HepG2 (cell line): ENCODE measurements at regions of chr12 and their contacts with region 1.

Region 1: DNA sequence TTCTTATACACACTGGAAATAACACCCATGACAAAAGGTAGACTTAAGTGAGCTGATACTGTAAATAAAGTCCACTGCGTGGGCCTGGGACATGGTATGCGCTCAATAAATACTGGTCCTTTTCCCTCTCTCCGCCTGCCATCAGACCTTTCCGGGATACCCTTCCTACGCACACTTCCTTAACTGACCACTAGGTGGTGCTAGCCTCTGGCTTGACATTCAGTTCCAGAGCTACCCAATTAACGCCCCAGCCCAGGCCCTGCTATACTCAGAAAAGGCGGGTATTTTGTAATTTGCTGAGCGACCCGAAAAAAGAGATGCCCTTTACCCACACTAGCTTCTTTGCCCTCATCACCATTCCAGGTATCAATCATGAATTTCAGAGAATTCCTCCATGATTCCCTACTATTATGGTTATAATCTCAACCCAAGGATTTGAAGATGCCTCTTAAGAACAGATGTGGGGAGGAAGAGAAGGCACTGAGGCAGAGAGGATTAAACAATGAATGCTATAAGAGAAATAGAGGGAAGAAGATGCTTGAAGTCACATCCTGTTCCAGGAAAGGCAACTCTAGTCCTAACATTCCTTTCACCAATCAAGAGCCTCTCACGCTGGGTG is 3.9 kb upstream of the LRP1 start:
- DNase-seq: peak; percentile 73
- ATAC-seq: peak; percentile 49
- H3K4me3 ChIP-seq: no peak overlapping the region
- H3K27ac ChIP-seq: no peak overlapping the region
- H3K4me1 ChIP-seq: peaks cover 10% of the 10 kb centered on the region
- H3K27me3 ChIP-seq: no peaks in the 10 kb centered on the region; a peak in 1 of 5 replicates
- CTCF ChIP-seq: peak; percentile 91
- EP300 ChIP-seq: no peak
- POLR2A ChIP-seq: no peak
- RAD21 ChIP-seq: peak; percentile 90

Region 2: DNA sequence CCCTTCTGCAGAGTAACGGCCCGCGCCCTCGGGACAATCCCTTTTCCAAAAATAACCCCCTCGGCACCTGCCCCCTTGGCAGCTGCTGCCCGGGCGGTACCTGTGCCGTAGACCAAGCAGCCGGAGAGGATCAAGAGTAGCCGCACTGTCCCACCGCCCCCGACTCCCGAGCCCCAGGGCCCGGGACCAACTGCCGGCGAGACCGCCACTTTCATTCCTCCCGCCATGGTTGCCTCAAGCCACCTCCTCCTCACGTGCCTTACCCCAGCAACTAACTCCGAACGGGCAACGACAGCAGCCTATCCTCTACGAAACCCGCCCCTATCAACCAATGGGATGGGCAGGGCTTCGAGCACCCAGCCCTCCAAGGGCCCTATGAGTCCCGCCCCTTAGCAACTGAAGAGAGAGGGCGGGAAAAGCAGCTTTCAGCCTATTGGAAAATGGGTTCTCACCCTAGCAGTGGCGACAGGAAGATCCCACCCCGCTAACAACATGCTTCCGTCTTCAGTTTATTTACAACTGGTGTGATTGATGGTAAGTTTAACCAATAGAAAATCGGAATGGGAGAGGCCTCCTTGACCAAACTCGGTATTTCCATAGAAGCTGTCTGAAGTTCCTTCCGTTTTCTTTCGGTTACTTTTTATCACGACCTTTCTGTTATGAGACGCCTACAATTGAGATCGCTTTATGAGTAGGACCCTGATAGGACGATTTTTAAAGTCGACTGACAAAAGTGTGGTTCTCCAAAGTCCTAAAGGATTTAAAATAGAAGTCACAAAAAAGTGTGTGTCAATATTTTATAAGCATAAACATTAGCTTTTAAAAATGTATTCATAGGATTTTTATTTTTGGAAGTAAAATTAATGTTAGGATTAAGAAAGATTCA is 45.6 kb before region 1 on chr12 and contains the start of gene NEMP1:
- CTCF ChIA-PET with region 1: no interaction called
- POLR2A ChIA-PET with region 1: interaction called, 30 read pairs
- in situ Hi-C with region 1: no loop called
- intact Hi-C with region 1: no loop called
- DNase-seq: peak; percentile 100
- ATAC-seq: peak; percentile 99
- H3K4me3 ChIP-seq: peak within 1 kb of the TSS; percentile 86 to 91 (median 87)
- H3K27ac ChIP-seq: peak within 1 kb of the TSS; percentile 69
- H3K4me1 ChIP-seq: peaks cover 8% of the 10 kb centered on the region
- H3K27me3 ChIP-seq: no peaks in the 10 kb centered on the region
- CTCF ChIP-seq: no peak
- EP300 ChIP-seq: peak in 1 of 2 experiments; percentile 24; a peak in 1 of 4 replicates
- POLR2A ChIP-seq: peak; percentile 70 to 74
- RAD21 ChIP-seq: 0 out of 2 replicates have a peak, but pooled peaks have one; percentile 17
- total RNA-seq, gene NEMP1: 8.3 and 12.9 TPM in 2 replicates

Region 3: GRCh38 chr12:57101844-57102695 is 22.3 kb before region 1 on chr12:
- CTCF ChIA-PET with region 1: no interaction called
- POLR2A ChIA-PET with region 1: interaction called, 20 read pairs
- in situ Hi-C with region 1: no loop called
- intact Hi-C with region 1: no loop called
- DNase-seq: peak; percentile 99
- ATAC-seq: peak; percentile 88
- H3K4me3 ChIP-seq: peak overlapping the region; percentile 19 to 65 (median 34); a peak in 5 of 6 replicates
- H3K27ac ChIP-seq: peak overlapping the region; percentile 99
- H3K4me1 ChIP-seq: peaks cover 44% of the 10 kb centered on the region
- H3K27me3 ChIP-seq: no peaks in the 10 kb centered on the region
- CTCF ChIP-seq: peak; percentile 58
- EP300 ChIP-seq: peak; percentile 52 to 72; a peak in 3 of 4 replicates
- POLR2A ChIP-seq: peak; percentile 53 to 71; a peak in 3 of 4 replicates
- RAD21 ChIP-seq: no peak

Region 4: DNA sequence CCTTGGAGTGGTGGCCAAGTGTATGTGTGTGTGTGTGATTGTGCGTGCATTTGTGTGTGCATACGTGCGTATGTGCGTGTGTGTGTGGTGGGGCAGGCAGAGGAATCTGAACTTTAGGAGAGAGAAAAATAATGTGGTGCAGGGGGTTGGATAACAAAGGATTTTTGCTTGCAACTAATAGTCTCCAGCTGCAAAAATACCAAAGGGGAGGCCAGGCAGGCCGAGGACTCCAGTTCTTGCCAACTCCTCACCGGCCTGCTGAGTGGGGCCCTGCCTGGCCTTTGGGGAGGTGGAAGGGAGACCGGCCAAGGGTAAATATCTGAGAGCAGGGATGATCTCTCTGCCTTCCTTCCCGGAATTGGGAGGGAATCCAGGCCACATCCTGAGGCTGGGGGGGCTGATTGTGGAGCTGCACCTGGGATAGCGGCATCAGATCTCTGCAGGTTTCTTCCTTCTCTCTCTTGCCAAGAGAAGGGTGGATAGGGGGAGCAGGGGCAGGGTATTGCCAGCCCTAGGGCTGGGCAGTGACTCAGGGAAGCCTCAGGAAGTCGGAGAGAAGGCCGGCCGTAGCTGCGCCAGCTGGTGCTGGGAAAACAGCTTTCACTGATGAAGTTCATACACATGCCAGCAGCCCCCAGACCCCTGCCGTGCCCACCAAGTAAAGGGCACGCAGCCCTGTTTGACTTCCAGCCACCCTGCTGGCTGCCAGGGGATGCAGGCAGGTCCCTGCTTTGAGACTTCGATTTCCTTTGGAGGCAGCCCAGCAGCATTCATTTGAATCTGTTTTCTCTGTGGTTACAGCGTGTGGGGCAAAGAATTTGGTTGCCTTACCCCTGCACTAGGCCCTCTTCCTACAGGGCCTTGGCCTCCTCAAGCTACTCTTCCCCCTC is 27.6 kb after region 1 on chr12:
- CTCF ChIA-PET with region 1: no interaction called
- POLR2A ChIA-PET with region 1: interaction called, 827 read pairs
- in situ Hi-C with region 1: no loop called
- intact Hi-C with region 1: loop called (anchors 1 kb)
- DNase-seq: no peak
- ATAC-seq: no peak
- H3K4me3 ChIP-seq: no peak overlapping the region
- H3K27ac ChIP-seq: no peak overlapping the region
- H3K4me1 ChIP-seq: peaks cover 87% of the 10 kb centered on the region
- H3K27me3 ChIP-seq: no peaks in the 10 kb centered on the region
- CTCF ChIP-seq: no peak
- EP300 ChIP-seq: no peak
- POLR2A ChIP-seq: 0 out of 4 replicates have a peak, but pooled peaks of 1 of the 2 experiments have one; percentile 18
- RAD21 ChIP-seq: no peak

Region 5: DNA sequence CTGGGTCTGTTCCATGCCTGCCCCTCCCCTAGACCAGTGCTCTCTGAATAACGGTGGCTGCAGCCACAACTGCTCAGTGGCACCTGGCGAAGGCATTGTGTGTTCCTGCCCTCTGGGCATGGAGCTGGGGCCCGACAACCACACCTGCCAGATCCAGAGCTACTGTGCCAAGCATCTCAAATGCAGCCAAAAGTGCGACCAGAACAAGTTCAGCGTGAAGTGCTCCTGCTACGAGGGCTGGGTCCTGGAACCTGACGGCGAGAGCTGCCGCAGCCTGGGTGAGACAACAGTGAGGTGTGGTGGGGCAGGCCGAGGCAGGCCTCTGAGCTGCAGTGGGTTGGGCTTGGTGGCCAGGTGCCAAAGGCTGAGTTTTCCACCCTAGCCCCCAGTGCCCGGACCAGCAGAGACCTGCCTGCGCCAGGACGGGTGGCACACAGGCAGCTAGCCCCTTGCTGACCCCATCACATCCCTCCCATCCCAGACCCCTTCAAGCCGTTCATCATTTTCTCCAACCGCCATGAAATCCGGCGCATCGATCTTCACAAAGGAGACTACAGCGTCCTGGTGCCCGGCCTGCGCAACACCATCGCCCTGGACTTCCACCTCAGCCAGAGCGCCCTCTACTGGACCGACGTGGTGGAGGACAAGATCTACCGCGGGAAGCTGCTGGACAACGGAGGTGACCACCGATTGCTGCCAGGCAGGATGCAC is 51.2 kb after region 1 on chr12:
- CTCF ChIA-PET with region 1: interaction called, 47 read pairs
- POLR2A ChIA-PET with region 1: interaction called, 103 read pairs
- in situ Hi-C with region 1: no loop called
- intact Hi-C with region 1: loop called (anchors 1 kb)
- DNase-seq: peak; percentile 39
- ATAC-seq: peak; percentile 19
- H3K4me3 ChIP-seq: no peak overlapping the region
- H3K27ac ChIP-seq: no peak overlapping the region
- H3K4me1 ChIP-seq: 0 out of 2 replicates have a peak, but pooled peaks cover 5% of the 10 kb centered on the region
- H3K27me3 ChIP-seq: no peaks in the 10 kb centered on the region
- CTCF ChIP-seq: peak; percentile 83
- EP300 ChIP-seq: no peak
- POLR2A ChIP-seq: peak in 1 of 2 experiments; percentile 38; a peak in 1 of 4 replicates
- RAD21 ChIP-seq: peak; percentile 65

Region 6: GRCh38 chr12:57229634-57230380 is 105.4 kb after region 1 on chr12 and contains the start of gene SHMT2:
- CTCF ChIA-PET with region 1: no interaction called
- POLR2A ChIA-PET with region 1: interaction called, 26 read pairs
- in situ Hi-C with region 1: no loop called
- intact Hi-C with region 1: no loop called
- DNase-seq: peak; percentile 95
- ATAC-seq: peak; percentile 73
- H3K4me3 ChIP-seq: peak within 1 kb of the TSS; percentile 71 to 82 (median 75)
- H3K27ac ChIP-seq: peak within 1 kb of the TSS; percentile 95
- H3K4me1 ChIP-seq: peaks cover 81% of the 10 kb centered on the region
- H3K27me3 ChIP-seq: peaks cover 0 to 21% of the 10 kb centered on the region in 2 experiments; a peak in 4 of 5 replicates
- CTCF ChIP-seq: no peak; the same call in 1 of the 2 replicates
- EP300 ChIP-seq: no peak
- POLR2A ChIP-seq: peak in 1 of 2 experiments; percentile 68; a peak in 2 of 4 replicates
- RAD21 ChIP-seq: no peak
- total RNA-seq, gene SHMT2: 181 and 184 TPM in 2 replicates